ENCODE measurements at regions of chr12 and their contacts with region 1.

Region 1: DNA sequence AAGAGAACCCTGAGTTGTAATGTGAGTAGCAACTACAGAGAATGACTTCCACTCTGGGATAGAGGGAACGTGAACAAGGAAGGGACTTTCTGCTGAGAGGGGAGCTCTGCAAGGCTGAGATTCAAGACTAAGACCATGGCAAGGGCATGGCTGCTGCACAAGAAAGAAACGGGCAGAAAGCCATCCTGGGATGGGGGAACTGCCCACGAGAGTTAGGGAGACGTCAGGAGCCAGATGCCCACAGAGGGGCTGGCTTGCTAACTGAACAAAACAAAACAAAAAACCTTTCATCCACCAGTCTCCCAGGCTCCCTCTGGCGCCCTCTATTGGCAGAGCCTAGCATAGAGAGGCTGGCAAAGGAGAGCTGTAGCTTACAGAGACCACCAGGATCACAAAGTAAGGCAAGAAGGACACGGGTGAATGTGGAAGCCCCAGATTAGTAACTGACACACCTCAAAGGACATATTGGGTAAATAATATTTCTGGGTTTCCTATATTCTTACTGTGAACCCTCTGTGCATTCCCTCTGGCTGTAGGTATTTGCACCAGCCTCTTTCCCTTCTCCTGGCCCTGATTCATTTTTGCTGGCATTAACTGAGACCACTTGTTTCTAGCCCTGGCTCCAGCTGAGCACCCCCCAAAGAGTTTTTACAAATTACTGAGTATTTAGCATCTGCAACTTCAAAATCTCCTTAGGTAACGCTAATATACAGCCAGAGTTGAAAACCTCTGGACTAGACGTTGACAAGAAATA is 338.3 kb downstream of the EMP1 start:
- DNase-seq: peak; percentile 41 to 84 (median 78)
- H3K4me3 ChIP-seq: peak overlapping the region in 47 of 59 donors; percentile 1 to 61 (median 34)
- H3K27ac ChIP-seq: peak overlapping the region in 3 of 59 donors; percentile 21 to 31 (median 28)
- H3K27me3 ChIP-seq: no peaks in the 10 kb centered on the region
- CTCF ChIP-seq: peak; percentile 68 to 97 (median 90)

Region 2: DNA sequence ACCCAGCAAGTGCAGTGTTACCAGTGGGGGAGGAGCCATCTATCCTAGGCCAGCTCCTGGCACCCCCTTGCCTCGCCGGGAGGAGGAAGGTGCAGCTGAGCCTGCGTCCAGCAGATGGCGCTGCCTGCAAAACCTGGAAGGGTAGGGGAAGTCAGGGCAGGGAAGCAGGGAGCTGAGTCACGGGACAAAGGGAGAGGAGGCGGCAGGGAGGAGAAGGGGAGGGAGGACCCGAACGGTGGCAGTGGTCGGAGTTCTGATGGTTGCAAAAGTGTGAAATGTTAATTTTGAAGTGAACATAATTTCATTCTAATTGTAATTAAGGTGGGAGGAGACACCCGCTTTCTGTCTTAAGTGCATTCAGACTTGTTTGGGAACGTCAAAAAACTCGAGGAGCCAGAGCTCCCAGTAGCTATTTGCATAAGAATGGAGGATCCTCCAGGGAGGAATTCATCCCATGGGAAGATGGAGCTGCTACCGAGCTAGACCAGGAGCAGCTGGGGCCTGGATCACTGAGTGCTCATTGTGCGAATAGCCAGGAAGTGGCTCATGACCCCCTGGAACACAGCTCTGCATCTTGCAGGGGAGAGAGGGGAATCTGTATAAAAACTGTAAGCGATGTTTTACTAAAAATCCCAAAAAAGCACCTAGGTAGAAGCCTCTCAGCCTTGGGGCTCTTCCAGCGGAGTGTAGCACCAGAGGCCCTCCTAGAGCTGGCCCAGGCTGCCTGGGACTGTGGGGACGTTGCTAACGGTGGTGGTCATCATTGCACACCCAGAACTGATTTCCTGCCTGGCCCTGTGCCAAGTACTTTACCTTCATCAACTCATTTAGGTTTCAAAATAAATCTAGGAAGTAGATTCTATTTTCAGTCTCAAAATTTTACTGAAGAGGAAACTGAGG is 278.8 kb before region 1 on chr12:
- intact Hi-C with region 1: loop called in 1 of 2 experiments (anchors 5 kb)
- DNase-seq: peak; percentile 77 to 96 (median 93)
- H3K4me3 ChIP-seq: peak overlapping the region; percentile 11 to 71 (median 50)
- H3K27ac ChIP-seq: peak overlapping the region in 49 of 59 donors; percentile 14 to 84 (median 64)
- H3K27me3 ChIP-seq: no peaks in the 10 kb centered on the region
- CTCF ChIP-seq: peak; percentile 92 to 99 (median 98)

Region 3: GRCh38 chr12:13278249-13278787 is 256.5 kb before region 1 on chr12:
- intact Hi-C with region 1: loop called (anchors 2 to 5 kb)
- DNase-seq: peak in 9 of 10 donors; percentile 63 to 87 (median 72)
- H3K4me3 ChIP-seq: peak overlapping the region in 38 of 59 donors; percentile 0 to 52 (median 25)
- H3K27ac ChIP-seq: peak overlapping the region in 27 of 59 donors; percentile 1 to 75 (median 44)
- H3K27me3 ChIP-seq: peaks cover 0 to 10% (median 0%) of the 10 kb centered on the region in 45 donors
- CTCF ChIP-seq: peak; percentile 90 to 99 (median 95)

Region 4: DNA sequence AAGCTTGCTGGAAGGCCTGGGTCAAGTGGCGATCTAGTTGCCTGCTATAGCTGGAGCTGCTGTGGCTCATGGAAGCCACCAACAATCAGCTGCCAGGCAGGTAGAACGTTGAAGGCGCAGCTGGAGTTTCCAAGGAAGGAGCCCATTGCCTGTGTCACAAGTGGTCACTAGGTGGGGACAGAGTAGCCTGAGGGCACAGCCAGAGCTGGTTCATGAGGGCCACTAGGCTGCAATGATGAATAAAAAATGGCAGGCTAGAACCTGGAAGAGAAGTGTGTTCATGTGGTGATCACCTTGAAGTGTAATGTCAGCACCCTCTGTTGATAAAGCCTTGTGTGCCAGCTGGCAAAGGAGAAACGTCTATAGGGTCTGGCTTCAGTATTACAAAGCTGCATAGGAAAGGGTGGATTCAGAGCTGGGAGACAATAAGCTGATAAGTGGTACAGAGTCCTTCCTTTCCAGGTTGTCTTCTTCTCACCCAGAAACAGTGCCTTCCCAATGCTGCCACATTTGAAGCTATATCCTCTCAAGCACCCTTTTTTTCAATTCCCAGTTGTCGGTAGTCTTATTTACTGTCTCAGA is 172.5 kb before region 1 on chr12:
- intact Hi-C with region 1: loop called (anchors 2 to 5 kb)
- DNase-seq: peak in 6 of 10 donors; percentile 28 to 58 (median 46)
- H3K4me3 ChIP-seq: no peak overlapping the region
- H3K27ac ChIP-seq: no peak overlapping the region
- H3K27me3 ChIP-seq: peaks cover 0 to 6% (median 0%) of the 10 kb centered on the region in 45 donors
- CTCF ChIP-seq: peak; percentile 33 to 88 (median 72)

Region 5: GRCh38 chr12:13452955-13453570 is 81.8 kb before region 1 on chr12:
- intact Hi-C with region 1: loop called in 1 of 2 experiments (anchors 5 kb)
- DNase-seq: peak in 3 of 10 donors; percentile 32 to 52 (median 50)
- H3K4me3 ChIP-seq: peak overlapping the region in 1 of 59 donors; percentile 18
- H3K27ac ChIP-seq: peak overlapping the region in 25 of 59 donors; percentile 12 to 70 (median 49)
- H3K27me3 ChIP-seq: no peaks in the 10 kb centered on the region
- CTCF ChIP-seq: peak in 26 of 56 donors; percentile 7 to 57 (median 18)

Measured in dorsolateral prefrontal cortex (tissue), 120 donors.